ENCODE measurements at regions of chr11 and their contacts with region 1.

Region 1: DNA sequence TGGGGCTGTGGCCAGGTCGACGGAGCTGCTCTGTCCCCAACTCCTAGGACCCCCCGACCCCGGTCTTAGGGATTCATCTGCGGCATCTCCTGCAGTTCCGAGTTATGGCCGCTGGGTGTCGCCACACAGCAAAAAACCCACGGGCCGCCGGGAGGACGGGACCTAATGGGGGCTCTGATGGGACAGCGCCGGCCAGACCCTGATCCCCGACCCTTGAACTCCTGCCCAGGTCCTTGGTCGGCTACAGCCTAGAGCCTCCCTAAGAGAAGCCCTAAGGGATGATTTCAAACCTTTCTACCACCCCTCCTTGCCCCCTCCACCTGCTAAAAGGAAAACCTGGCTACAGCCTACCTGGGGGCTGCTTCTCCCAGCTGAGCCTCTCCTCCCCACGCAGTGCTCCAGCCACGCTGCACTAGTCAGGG is 30.8 kb upstream of the LRRC10B start:
- DNase-seq: peak; percentile 74
- ATAC-seq: peak; percentile 30

Region 2: GRCh38 chr11:61516675-61517572 is 39.2 kb after region 1 on chr11:
- intact Hi-C with region 1: no loop called
- DNase-seq: peak; percentile 62
- ATAC-seq: peak; percentile 49

Region 3: DNA sequence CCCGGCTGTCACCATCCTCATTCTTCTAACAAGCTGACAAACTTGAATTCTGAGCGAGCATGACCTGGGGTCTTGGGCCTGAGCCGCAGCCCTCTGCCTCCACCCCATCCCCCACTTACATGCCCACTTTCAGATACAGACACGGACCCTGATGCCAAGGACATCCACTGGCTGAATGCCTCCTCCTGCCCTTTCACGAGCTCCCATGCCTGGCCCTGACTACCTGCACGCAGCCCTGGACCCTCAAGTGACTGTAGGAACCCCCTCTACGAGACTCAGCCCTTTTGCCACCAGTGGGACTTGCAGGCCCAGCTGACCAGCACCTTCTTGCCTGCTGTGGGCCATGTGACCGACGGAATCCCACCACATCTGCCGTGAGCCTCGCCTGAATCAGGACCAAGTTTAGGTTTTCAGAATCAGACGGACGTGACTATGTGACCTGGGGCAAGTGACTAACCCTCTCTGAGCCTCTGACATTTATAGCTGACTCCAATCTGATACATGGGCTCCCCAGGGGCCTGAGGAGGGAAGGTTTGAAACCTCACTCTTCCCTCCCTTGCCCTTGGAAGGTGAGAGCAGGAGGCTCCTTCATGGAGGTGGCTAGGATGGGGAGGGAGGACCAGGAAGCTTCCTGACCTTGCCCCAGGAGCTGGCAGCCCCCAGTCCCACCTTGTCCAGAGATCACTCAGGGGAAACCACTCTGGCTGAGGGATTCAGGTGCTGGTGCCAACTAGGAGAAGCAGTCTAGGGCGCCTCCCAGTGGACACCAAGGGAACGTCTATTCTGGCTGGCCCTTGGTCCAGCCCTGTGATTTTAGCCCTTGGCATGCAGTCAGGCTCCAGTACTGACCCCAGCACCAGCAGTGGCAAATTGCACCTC is 150.1 kb after region 1 on chr11:
- intact Hi-C with region 1: loop called (anchors 10 kb)
- DNase-seq: peak; percentile 76
- ATAC-seq: peak; percentile 84

Measured in left ventricle myocardium superior (tissue), 1 donor.